Mammary epithelial cell (primary cell): ENCODE measurements at regions of chr3 and their contacts with region 1.

Region 1: GRCh38 chr3:149273096-149273751 is 51.6 kb upstream of the CP start:
- DNase-seq: peak; percentile 69
- H3K4me3 ChIP-seq: no peak overlapping the region
- H3K27ac ChIP-seq: no peak overlapping the region
- H3K4me1 ChIP-seq: peaks cover 9% of the 10 kb centered on the region
- H3K27me3 ChIP-seq: no peaks in the 10 kb centered on the region
- CTCF ChIP-seq: peak; percentile 96

Region 2: DNA sequence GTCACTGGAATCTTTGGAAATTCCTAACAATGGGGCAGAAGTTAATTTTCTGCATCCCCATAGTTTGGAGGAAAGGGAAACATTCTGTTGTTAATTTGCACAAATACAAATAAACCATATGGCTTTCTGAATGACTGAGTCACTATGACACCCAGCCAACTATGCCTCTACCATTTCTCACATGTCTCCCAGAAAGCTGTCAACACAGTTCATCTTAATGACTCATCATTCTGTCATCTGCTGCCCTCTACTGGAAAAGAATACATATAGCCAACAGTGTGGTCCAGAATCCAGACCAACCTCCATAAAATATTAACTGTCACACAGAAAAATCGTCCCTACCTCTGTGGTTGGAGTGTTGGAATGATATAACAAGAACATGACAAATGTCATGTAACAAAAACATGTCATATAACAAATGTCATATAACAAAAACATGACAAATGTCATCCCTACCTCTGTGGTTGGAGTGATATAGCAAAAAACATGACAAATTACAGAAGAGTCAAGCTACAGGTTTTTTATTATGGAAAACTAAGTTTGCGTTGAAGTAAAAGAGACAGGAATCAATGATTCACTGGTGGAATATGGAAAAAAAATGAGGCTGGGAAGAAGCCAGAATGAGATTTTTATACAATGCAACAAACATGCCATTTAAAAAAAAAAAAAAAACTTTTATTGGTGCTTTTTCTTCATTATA is 329.6 kb before region 1 on chr3:
- CTCF ChIA-PET with region 1: no interaction called
- dilution Hi-C with region 1: no loop called
- in situ Hi-C with region 1: loop called in 1 of 2 experiments (anchors 5 kb)
- intact Hi-C with region 1: no loop called
- DNase-seq: peak; percentile 73
- H3K4me3 ChIP-seq: no peak overlapping the region
- H3K27ac ChIP-seq: no peak overlapping the region
- H3K4me1 ChIP-seq: no peaks in the 10 kb centered on the region
- H3K27me3 ChIP-seq: no peaks in the 10 kb centered on the region
- CTCF ChIP-seq: peak; percentile 67 to 73

Region 3: DNA sequence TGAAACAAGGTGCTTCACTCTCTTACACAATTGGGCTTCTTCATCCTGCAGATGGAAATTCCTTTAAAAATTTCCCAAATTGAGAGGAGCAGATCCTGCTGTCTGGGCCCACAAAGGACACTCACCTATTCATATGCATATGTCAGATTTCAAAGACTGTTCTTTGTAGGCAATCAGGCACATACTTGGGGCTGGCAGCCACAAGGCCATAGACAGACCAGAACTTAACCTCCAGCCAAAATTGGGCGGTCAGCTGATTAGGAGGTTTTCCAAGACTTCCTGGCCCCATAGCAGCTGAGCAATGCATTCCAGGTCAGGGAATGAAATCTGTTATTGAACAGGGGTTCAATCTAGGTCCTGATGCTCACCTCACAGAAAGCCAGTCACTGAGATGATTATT is 158.8 kb before region 1 on chr3:
- CTCF ChIA-PET with region 1: no interaction called
- dilution Hi-C with region 1: no loop called
- in situ Hi-C with region 1: loop called in 1 of 2 experiments (anchors 5 kb)
- intact Hi-C with region 1: no loop called
- DNase-seq: no peak
- H3K4me3 ChIP-seq: no peak overlapping the region
- H3K27ac ChIP-seq: no peak overlapping the region
- H3K4me1 ChIP-seq: no peaks in the 10 kb centered on the region
- H3K27me3 ChIP-seq: no peaks in the 10 kb centered on the region
- CTCF ChIP-seq: no peak

Region 4: GRCh38 chr3:149120051-149120972 is 152.9 kb before region 1 on chr3:
- CTCF ChIA-PET with region 1: no interaction called
- dilution Hi-C with region 1: no loop called
- in situ Hi-C with region 1: loop called (anchors 5 kb)
- intact Hi-C with region 1: loop called (anchors 1 kb)
- DNase-seq: peak; percentile 35
- H3K4me3 ChIP-seq: no peak overlapping the region
- H3K27ac ChIP-seq: no peak overlapping the region
- H3K4me1 ChIP-seq: no peaks in the 10 kb centered on the region
- H3K27me3 ChIP-seq: no peaks in the 10 kb centered on the region
- CTCF ChIP-seq: peak; percentile 51 to 57

Region 5: DNA sequence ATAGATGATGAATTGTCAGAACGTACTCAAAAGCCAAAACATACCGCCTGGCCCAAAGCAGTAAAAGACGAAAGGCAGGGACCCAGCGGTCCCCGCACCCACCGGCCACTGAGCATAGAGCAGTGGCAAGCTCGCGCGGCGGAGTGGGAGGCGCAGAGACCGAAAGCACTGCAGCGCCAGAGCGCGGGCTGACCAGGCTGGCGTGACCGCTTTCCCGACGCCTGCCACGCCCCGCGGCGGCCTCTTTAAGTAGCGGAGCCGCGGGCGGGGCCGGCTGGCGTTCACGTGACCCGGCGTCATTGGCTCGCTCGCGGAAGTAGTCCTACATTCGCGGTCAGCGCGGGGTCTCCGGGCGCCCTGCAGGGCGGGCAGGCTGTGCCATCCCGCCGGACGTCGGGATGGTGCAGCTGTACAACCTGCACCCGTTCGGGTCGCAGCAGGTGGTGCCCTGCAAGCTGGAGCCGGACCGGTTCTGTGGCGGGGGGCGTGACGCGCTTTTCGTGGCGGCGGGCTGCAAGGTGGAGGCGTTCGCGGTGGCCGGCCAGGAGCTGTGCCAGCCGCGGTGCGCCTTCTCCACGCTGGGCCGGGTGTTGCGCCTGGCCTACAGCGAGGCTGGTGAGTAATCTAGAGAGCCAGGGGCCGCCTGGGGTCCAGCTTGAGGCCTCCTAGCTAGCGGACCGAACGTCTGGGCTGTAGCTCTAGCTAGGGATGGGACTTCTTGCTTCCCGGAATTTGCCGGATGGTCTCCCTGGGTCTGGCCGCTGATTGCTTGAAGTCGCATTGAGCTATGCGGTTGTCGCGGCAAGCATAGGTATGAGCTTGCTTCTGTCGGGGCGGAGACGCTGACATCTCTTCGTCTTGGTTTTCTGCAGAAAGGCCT is 143.7 kb before region 1 on chr3 and contains the start of gene HPS3:
- CTCF ChIA-PET with region 1: no interaction called
- dilution Hi-C with region 1: no loop called
- in situ Hi-C with region 1: loop called in 1 of 2 experiments (anchors 5 kb)
- intact Hi-C with region 1: loop called (anchors 2 kb)
- DNase-seq: peak; percentile 87
- H3K4me3 ChIP-seq: peak within 1 kb of the TSS; percentile 83 to 92 (median 91)
- H3K27ac ChIP-seq: peak within 1 kb of the TSS; percentile 58
- H3K4me1 ChIP-seq: peaks cover 16% of the 10 kb centered on the region
- H3K27me3 ChIP-seq: no peaks in the 10 kb centered on the region
- CTCF ChIP-seq: no peak
- total RNA-seq, gene HPS3: 11.9 to 21.2 TPM

Region 6: GRCh38 chr3:149330609-149331331 is 57.5 kb after region 1 on chr3:
- CTCF ChIA-PET with region 1: no interaction called
- dilution Hi-C with region 1: no loop called
- in situ Hi-C with region 1: no loop called
- intact Hi-C with region 1: loop called (anchors 1 kb)
- DNase-seq: peak; percentile 70
- H3K4me3 ChIP-seq: no peak overlapping the region
- H3K27ac ChIP-seq: no peak overlapping the region
- H3K4me1 ChIP-seq: peaks cover 6% of the 10 kb centered on the region
- H3K27me3 ChIP-seq: no peaks in the 10 kb centered on the region
- CTCF ChIP-seq: no peak

Region 7: DNA sequence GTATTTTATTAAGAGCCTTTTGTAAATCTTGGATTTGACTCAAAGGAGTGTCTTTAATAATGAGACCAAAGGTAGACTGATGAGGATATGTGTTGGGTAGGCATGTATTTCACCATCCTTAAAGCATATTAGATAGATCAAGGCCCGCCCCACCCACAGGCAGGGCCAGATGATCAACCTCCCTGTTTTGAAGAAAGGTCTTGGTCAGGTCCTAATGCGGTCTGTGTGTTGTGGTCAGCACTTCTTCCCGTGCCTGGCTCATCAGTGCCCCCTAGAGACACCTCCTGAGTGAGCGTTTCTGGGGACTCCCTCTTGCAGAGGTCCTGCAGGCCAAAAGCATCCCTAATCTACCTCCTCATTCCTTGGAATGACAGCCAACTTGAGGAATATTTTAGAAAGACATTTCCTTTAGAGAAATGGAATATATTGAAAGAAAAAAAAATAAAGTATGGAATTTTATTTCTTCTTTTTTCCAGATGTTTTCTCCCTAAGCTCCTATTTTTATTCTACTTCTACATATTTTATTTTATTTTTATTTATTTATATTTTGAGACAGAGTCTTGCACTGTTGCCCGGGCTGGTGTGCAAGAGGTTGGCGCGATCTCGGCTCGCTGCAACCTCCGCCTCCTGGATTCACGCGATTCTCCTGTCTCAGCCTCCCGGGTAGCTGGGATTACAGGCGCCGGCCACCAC is 207.2 kb after region 1 on chr3:
- CTCF ChIA-PET with region 1: no interaction called
- dilution Hi-C with region 1: no loop called
- in situ Hi-C with region 1: loop called in 1 of 2 experiments (anchors 10 kb)
- intact Hi-C with region 1: loop called (anchors 1 kb)
- DNase-seq: peak; percentile 73
- H3K4me3 ChIP-seq: no peak overlapping the region
- H3K27ac ChIP-seq: no peak overlapping the region
- H3K4me1 ChIP-seq: peaks cover 3% of the 10 kb centered on the region
- H3K27me3 ChIP-seq: no peaks in the 10 kb centered on the region
- CTCF ChIP-seq: peak; percentile 94 to 99